Panc1 (cell line): ENCODE measurements at regions of chr11 and their contacts with region 1.

Region 1: GRCh38 chr11:27183672-27184457 is 143.2 kb downstream of the BBOX1 start:
- DNase-seq: peak; percentile 55
- ATAC-seq: peak; percentile 79
- H3K4me3 ChIP-seq: no peak overlapping the region
- H3K27ac ChIP-seq: peak overlapping the region; percentile 70
- H3K4me1 ChIP-seq: peaks cover 4% of the 10 kb centered on the region
- H3K27me3 ChIP-seq: no peaks in the 10 kb centered on the region
- CTCF ChIP-seq: peak; percentile 75; the same call in 1 of the 2 replicates

Region 2: DNA sequence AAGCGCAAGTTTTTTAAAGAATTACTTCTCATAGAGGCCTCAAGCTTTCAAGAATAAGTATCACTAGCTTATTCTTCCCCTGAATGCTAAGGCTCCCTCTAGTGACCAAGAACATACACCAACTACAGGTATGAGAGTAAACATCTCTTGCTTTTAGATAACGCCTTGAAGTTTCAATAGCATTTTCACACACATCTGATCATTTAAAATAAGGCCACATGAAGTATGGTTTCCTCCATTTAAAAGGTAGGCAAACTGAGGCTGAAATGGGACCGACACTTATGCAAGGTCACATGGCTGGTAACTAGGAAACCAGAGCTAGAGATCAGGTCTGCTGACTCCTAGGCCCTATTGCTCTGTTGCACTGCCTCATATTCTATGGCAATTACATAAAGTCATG is 112.6 kb after region 1 on chr11:
- CTCF ChIA-PET with region 1: interaction called, 11 read pairs
- POLR2A ChIA-PET with region 1: no interaction called
- in situ Hi-C with region 1: no loop called
- intact Hi-C with region 1: loop called (anchors 5 kb)
- DNase-seq: peak; percentile 41
- ATAC-seq: peak; percentile 90
- H3K4me3 ChIP-seq: no peak overlapping the region
- H3K27ac ChIP-seq: peak overlapping the region; percentile 83
- H3K4me1 ChIP-seq: peaks cover 14% of the 10 kb centered on the region; the same call in 1 of the 2 replicates
- H3K27me3 ChIP-seq: no peaks in the 10 kb centered on the region
- CTCF ChIP-seq: peak; percentile 80

Region 3: DNA sequence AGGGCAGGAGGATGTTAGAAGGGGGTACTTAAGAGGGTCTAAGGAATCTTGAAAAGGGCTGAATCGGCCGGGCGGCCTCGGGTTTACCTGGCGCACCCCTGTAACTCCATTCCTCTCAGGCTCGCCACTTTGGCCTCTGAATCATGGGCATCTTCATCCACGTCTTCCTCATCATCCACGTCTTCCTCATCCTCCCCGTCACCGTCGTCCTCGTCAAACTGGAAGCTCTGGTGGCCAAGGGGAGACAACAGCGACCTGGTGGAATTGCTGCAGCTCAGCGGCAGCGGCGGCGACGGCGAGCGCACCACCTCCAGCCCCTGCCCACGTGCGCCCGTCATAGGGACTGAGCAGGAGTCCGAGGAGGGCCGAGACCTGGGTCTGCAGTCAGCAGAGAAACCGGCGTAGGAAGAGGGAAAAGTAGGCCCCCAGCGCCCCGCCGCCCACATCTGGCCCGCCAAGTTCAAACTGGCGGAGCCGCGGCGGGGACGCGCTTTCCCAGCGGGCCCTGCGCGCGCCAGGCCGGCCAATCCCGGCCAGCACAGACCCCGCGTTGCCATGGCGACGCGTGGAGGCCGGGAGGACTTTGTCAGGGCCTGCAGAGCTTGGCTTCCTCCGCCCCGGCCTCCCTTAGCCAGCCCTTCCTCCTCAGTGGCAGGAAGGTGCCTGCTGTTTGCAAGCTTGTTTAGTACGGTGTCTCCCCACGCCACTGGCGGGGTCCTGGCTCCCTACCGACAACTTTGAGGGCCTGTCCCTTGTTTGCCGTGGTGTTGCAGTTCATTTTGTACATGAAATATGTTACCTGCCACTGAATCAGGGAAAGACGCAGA is 179.1 kb after region 1 on chr11 and contains the start of gene CCDC34:
- CTCF ChIA-PET with region 1: no interaction called
- POLR2A ChIA-PET with region 1: no interaction called
- in situ Hi-C with region 1: no loop called
- intact Hi-C with region 1: loop called (anchors 10 kb)
- DNase-seq: peak; percentile 46
- ATAC-seq: peak; percentile 99
- H3K4me3 ChIP-seq: peak within 1 kb of the TSS; percentile 63 to 79
- H3K27ac ChIP-seq: peak within 1 kb of the TSS; percentile 95
- H3K4me1 ChIP-seq: peaks cover 33% of the 10 kb centered on the region
- H3K27me3 ChIP-seq: no peaks in the 10 kb centered on the region
- CTCF ChIP-seq: no peak
- total RNA-seq, gene CCDC34: 28.3 TPM

Region 4: DNA sequence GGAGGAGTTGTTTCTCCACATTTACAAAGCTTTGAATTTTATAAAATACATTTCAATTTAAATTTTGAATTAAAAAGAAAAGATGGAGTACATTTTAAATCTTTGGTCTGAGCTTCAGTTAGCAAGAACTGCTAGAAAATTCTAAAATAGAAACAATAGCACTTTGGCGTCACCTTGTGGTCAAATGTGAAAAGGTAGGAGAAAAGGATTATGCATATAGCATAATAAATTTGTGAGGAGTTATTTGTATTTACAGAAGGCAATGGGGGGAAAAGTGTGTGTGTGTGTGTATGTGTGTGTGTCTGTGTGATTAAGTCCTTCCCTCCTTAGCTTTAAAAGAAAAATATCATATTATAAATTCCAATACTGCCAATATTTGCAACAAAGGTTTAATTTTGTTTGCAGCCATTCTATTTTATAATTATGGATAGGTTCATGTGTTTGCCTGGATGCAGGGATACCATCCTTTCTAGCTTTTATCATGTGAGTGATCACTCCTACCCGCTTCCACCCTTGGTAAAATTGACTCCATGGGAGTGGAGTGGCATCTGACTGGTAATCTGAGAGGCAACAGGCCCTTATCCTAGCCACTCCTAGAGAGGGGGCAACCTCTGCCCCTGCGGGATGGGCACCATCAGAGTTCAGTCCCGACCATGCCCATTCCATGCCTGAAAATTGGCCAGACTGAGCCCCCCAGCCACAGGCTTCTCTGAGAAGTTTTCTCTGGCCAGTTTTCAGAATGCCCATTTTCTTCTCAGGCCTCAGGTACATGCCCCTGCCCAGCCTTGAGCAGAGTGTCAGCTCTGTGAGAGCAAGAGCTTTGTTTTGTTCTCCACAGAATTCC is 302.3 kb after region 1 on chr11:
- CTCF ChIA-PET with region 1: interaction called, 8 read pairs
- POLR2A ChIA-PET with region 1: no interaction called
- in situ Hi-C with region 1: no loop called
- intact Hi-C with region 1: loop called (anchors 1 kb)
- DNase-seq: no peak
- ATAC-seq: peak; percentile 76
- H3K4me3 ChIP-seq: no peak overlapping the region
- H3K27ac ChIP-seq: no peak overlapping the region; the same call in 1 of the 2 replicates
- H3K4me1 ChIP-seq: peaks cover 2% of the 10 kb centered on the region; the same call in 1 of the 2 replicates
- H3K27me3 ChIP-seq: no peaks in the 10 kb centered on the region
- CTCF ChIP-seq: peak; percentile 90; the same call in 1 of the 2 replicates